Panc1 (cell line): ENCODE measurements at regions of chr7 and their contacts with region 1.

Region 1: DNA sequence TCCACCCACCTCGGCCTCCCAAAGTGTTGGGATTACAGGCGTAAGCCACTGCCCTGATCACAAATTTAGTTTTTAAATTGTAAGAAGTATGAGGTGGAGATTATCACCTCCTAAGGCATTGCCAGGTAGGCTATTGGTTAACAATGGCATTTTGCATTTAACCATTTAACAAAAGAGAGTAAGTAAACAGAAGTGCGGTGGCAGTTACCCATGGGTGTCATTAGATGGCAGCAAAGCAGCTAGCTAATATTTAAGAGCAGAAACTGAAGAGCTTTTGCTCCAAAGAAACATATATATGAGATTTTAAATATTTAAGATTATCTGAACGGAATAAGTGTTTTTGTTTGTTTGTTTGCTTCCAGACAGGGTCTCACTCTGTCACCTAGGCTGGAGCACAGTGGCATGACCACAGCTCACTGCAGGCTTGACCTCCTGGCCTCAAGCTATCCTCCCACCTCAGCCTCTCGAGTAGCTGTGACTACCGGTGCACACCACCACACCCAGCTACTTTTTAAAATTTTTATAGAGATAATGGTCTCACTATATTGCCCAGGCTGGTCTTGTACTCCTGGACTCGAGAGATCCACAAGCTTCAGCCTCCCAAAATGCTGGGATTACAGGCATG is 325.5 kb upstream of the C7orf33 start:
- DNase-seq: peak; percentile 25
- ATAC-seq: 0 out of 2 replicates have a peak, but pooled peaks have one; percentile 58
- H3K4me3 ChIP-seq: no peak overlapping the region
- H3K27ac ChIP-seq: no peak overlapping the region
- H3K4me1 ChIP-seq: no peaks in the 10 kb centered on the region; the same call in 1 of the 2 replicates
- H3K27me3 ChIP-seq: 0 out of 2 replicates have a peak, but pooled peaks cover 2% of the 10 kb centered on the region
- CTCF ChIP-seq: peak; percentile 85

Region 2: GRCh38 chr7:148480479-148481146 is 215.6 kb after region 1 on chr7:
- CTCF ChIA-PET with region 1: interaction called, 8 read pairs
- POLR2A ChIA-PET with region 1: no interaction called
- in situ Hi-C with region 1: no loop called
- intact Hi-C with region 1: loop called (anchors 5 kb)
- DNase-seq: no peak
- ATAC-seq: no peak
- H3K4me3 ChIP-seq: no peak overlapping the region
- H3K27ac ChIP-seq: no peak overlapping the region
- H3K4me1 ChIP-seq: no peaks in the 10 kb centered on the region; the same call in 1 of the 2 replicates
- H3K27me3 ChIP-seq: peaks cover 3% of the 10 kb centered on the region; the same call in 1 of the 2 replicates
- CTCF ChIP-seq: no peak